ENCODE measurements at regions of chr22 and their contacts with region 1.

Region 1: DNA sequence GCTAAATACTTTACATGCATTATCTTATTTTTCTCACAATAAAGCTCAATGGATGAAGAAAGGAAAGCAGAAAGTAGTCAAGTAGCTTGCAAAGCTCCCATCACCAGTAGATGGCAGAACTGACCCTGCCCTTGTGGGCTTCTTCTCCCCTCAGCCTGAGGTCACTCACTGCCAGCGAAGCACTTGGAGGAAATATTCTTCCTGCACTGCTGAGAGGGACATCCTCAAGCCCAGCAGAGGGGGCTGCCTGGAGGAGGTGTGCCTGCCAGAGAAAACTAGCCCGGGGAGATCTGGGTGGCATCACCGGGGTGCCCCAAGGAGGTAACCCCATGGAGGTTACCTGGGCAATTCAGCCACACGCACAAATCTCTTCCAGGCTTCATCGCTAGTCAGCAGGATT is 6.6 kb downstream of the APOL4 start:
- DNase-seq: peak; percentile 72
- ATAC-seq: peak; percentile 62
- H3K4me3 Mint-ChIP-seq: no peak overlapping the region
- H3K27ac Mint-ChIP-seq: no peak overlapping the region
- H3K4me1 Mint-ChIP-seq: peaks cover 44% of the 10 kb centered on the region
- H3K27me3 Mint-ChIP-seq: no peaks in the 10 kb centered on the region

Region 2: GRCh38 chr22:36211237-36211861 is 16.4 kb after region 1 on chr22:
- CTCF ChIA-PET with region 1: interaction called, 14 read pairs
- POLR2A ChIA-PET with region 1: interaction called, 3 read pairs
- DNase-seq: peak; percentile 32
- ATAC-seq: no peak
- H3K4me3 Mint-ChIP-seq: peak overlapping the region; percentile 2
- H3K27ac Mint-ChIP-seq: no peak overlapping the region
- H3K4me1 Mint-ChIP-seq: peaks cover 26% of the 10 kb centered on the region
- H3K27me3 Mint-ChIP-seq: peaks cover 45% of the 10 kb centered on the region

Region 3: DNA sequence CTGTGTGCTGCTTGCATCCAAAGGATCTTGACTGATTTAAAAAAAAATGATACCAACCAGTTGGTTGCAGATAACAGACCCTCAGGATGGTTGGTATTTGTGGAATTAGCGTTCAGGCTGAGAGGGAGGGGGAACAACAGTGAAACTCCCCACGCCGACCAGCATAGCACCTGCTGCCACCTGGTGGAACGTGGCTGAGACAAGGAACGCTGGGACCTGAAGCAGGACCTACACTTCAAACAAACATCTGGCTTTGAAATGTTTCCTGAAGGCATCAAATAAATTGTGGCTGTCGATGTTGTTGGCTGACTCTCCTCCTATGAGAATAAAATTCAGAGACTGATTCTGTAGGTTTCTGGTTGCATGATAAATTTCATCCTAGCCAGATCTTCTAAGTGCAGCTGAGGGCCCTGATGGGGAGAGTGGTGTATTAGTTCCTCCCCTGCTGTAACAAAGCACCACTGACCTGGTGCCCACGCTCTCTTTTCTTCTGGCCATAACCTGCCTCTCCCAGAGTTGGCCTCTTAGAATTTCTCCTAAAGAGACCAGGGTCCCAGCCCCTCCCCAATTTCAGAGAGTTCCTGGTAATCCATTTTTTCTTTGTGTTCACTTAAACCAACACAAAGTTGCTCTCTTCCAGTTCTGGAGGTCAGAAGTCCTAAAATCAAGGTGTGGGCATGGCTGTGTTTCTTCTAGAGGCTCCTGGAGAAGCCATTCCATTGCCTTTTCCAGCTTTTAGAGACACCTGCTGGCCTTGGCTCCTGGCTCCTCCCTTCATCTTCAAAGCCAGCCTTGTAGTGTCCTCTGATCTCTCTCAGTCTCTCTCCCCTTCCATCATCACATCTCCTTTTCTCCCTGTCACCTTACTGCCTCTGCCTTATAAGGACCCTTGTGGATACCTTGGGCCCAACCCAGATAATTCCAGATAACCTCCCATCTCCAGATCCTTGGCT is 27.1 kb after region 1 on chr22:
- CTCF ChIA-PET with region 1: interaction called, 16 read pairs
- POLR2A ChIA-PET with region 1: no interaction called
- DNase-seq: peak; percentile 73
- ATAC-seq: peak; percentile 94
- H3K4me3 Mint-ChIP-seq: no peak overlapping the region
- H3K27ac Mint-ChIP-seq: no peak overlapping the region
- H3K4me1 Mint-ChIP-seq: peaks cover 12% of the 10 kb centered on the region
- H3K27me3 Mint-ChIP-seq: peaks cover 29% of the 10 kb centered on the region

Region 4: GRCh38 chr22:36277482-36278291 is 82.7 kb after region 1 on chr22:
- CTCF ChIA-PET with region 1: interaction called, 17 read pairs
- POLR2A ChIA-PET with region 1: no interaction called
- DNase-seq: peak; percentile 82
- ATAC-seq: peak; percentile 76
- H3K4me3 Mint-ChIP-seq: no peak overlapping the region
- H3K27ac Mint-ChIP-seq: peak overlapping the region; percentile 66
- H3K4me1 Mint-ChIP-seq: peaks cover 30% of the 10 kb centered on the region
- H3K27me3 Mint-ChIP-seq: no peaks in the 10 kb centered on the region

Region 5: DNA sequence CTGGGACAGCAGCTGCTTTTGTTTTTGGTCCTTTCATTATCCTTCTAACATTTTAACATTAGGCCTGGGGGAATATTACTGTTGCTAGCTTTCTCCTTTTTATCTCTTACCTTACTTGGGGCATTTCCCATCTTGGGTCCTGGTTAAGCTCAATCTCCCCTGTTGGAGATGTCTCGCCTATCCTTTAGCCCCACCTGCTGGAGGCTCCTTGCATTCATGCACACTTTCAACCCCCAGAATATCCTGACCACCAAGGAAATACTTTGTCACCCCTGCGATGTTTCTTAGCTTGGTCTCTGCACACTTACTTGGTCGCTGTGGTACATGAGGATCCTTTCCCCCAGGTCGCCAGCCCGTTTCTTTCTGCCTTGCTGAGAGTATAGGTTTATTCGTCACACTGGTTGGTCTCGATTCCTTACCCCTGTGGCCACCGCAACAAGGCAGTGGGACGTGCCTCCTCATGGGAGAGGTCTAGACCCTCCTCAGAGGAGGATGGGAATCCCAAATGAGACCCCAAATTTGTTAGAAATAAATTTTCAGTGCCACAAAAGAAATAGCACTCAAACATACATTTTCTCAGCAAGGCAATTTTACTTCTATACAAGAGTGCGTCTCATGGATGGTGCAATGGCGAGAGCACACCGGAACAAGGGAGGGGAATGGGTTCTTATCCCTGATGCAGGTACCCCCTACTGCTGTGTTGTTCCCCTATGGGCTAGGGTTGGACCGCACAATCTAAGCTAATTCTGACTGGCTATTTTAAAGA is 291.8 kb after region 1 on chr22:
- CTCF ChIA-PET with region 1: interaction called, 10 read pairs
- POLR2A ChIA-PET with region 1: no interaction called
- DNase-seq: peak; percentile 72
- ATAC-seq: no peak
- H3K4me3 Mint-ChIP-seq: no peak overlapping the region
- H3K27ac Mint-ChIP-seq: no peak overlapping the region
- H3K4me1 Mint-ChIP-seq: peaks cover 8% of the 10 kb centered on the region
- H3K27me3 Mint-ChIP-seq: no peaks in the 10 kb centered on the region